ENCODE measurements at regions of chr21 and their contacts with region 1.

Region 1: DNA sequence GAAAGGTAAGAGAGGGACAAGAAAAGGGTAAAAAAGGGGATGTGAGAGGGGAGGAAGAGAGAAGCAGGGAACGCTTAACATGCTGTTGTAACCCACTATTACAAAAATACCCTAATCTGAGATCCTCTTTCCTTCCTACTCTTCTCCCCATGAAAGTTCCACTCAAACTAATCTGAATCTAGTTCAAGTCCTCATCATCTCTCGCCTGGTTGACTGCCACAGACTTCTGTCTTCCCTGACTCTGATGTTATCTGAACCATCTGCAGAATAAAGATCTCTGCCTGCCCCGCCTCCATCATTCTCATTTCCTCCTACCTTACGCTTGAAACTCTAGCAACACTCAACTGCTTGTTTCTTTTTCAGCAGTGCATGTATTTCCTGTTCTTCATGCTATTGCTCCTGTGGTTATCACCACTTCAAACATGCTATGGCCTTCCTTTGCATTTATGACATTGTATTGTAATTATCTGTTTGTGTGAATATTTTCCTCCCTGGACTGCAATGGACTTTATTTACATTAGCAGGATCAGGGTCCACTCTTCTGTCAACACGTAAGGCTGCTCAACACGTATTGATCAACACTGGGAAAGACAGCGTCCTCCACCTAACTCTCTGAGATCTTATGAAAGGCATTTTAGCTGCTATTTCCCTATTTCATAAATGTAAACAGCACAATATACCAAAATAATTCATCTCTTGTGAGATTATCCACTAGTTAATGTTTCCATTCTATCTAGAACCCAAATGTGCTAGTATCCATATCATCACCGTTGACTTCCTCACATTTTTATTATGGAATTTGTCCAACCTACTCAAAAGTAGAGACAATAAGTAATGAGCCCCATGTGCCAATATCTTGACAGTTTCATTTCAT is 215.5 kb upstream of the USP25 start:
- DNase-seq: no peak
- H3K4me3 ChIP-seq: no peak overlapping the region
- H3K27ac ChIP-seq: no peak overlapping the region
- H3K4me1 ChIP-seq: no peaks in the 10 kb centered on the region
- H3K27me3 ChIP-seq: no peaks in the 10 kb centered on the region
- CTCF ChIP-seq: no peak
- POLR2A ChIP-seq: no peak

Region 2: GRCh38 chr21:14901482-14901958 is 612.8 kb before region 1 on chr21:
- intact Hi-C with region 1: loop called (anchors 5 kb)
- DNase-seq: no peak
- H3K4me3 ChIP-seq: no peak overlapping the region
- H3K27ac ChIP-seq: no peak overlapping the region
- H3K4me1 ChIP-seq: no peaks in the 10 kb centered on the region
- H3K27me3 ChIP-seq: no peaks in the 10 kb centered on the region
- CTCF ChIP-seq: no peak
- POLR2A ChIP-seq: no peak

Region 3: GRCh38 chr21:15275615-15276200 is 238.6 kb before region 1 on chr21:
- intact Hi-C with region 1: no loop called
- DNase-seq: no peak
- H3K4me3 ChIP-seq: no peak overlapping the region
- H3K27ac ChIP-seq: no peak overlapping the region
- H3K4me1 ChIP-seq: no peaks in the 10 kb centered on the region
- H3K27me3 ChIP-seq: no peaks in the 10 kb centered on the region
- CTCF ChIP-seq: no peak
- POLR2A ChIP-seq: no peak